GM13976 (cell line): ENCODE measurements at regions of chr1 and their contacts with region 1.

Region 1: GRCh38 chr1:180533266-180533987 is 25.3 kb upstream of the OVAAL start:
- DNase-seq: peak; percentile 67
- CTCF ChIP-seq: peak; percentile 70

Region 2: DNA sequence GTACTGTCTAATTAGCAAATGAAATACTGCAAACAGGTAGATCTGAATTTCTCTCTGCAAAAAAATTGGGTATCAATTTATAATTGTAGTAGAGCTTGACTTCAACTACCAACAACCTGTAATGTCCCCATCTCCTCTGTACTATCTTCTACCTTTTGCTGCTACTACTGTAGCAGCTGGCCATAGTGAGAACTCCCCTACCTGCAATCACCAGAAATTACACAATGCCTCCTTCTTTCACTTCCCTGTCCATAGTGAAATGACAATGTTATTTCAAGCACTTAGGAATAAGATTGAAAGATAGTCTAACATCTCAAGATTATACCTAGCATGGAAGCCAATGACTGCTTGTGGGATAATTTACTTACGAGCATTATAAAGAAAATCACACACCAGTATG is 131.4 kb before region 1 on chr1:
- in situ Hi-C with region 1: no loop called
- DNase-seq: no peak
- CTCF ChIP-seq: no peak

Region 3: DNA sequence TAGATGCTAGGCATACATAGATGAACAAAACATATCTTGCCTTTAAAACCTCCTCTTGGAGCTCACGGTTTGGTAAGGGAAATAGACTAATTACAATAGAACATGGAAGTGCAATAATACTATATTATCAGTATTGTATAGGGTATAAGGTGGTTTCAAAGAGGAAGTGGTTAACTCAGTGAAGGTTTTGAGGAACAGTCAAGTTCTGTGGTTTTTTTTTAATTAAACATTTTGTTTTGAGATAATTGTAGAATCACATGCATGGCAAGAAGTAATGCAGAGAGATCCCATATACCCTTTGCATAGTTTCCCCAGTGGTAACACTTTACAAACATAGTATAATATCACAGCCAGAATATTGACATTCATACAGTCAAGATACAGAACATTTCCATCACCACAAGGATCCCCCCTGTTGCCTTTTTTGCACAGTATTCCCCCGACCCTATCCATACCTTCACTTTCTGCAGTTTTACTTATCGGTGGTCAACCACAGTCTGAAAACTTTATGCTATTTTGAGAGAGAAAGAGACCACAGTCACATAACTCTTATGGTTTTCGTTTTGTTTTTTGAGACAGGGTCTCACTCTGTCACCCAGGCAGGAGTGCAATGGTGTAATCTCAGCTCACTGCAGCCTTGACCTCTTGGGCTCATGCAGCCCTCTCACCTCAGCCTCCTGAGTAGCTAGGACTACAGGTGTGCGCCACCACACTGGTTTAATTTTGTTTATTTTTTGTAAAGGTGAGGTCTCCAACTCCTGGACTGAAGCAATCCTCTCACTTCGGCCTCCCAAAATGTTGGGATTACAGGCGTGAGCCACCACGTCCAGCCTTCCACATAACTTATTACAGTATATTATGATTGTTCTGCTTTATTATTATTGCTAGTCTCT is 318.8 kb after region 1 on chr1:
- in situ Hi-C with region 1: loop called (anchors 10 kb)
- DNase-seq: no peak
- CTCF ChIP-seq: no peak